ENCODE measurements at regions of chr14 and their contacts with region 1.

Region 1: GRCh38 chr14:80996049-80996901 is 40.9 kb downstream of the TSHR start:
- DNase-seq: peak; percentile 35
- ATAC-seq: peak; percentile 98
- H3K4me3 Mint-ChIP-seq: no peak overlapping the region
- H3K27ac Mint-ChIP-seq: no peak overlapping the region
- H3K4me1 Mint-ChIP-seq: peaks cover 5% of the 10 kb centered on the region
- H3K27me3 Mint-ChIP-seq: peaks cover 12% of the 10 kb centered on the region

Region 2: GRCh38 chr14:81009346-81009745 is 13.1 kb after region 1 on chr14:
- CTCF ChIA-PET with region 1: interaction called, 15 read pairs
- POLR2A ChIA-PET with region 1: no interaction called
- intact Hi-C with region 1: no loop called
- DNase-seq: no peak
- ATAC-seq: no peak
- H3K4me3 Mint-ChIP-seq: no peak overlapping the region
- H3K27ac Mint-ChIP-seq: no peak overlapping the region
- H3K4me1 Mint-ChIP-seq: no peaks in the 10 kb centered on the region
- H3K27me3 Mint-ChIP-seq: no peaks in the 10 kb centered on the region

Region 3: GRCh38 chr14:81062816-81063215 is 66.5 kb after region 1 on chr14:
- CTCF ChIA-PET with region 1: interaction called, 3 read pairs
- POLR2A ChIA-PET with region 1: no interaction called
- intact Hi-C with region 1: loop called in 1 of 2 experiments (anchors 2 kb)
- DNase-seq: peak; percentile 41
- ATAC-seq: peak; percentile 84
- H3K4me3 Mint-ChIP-seq: no peak overlapping the region
- H3K27ac Mint-ChIP-seq: no peak overlapping the region
- H3K4me1 Mint-ChIP-seq: no peaks in the 10 kb centered on the region
- H3K27me3 Mint-ChIP-seq: peaks cover 6% of the 10 kb centered on the region

Region 4: DNA sequence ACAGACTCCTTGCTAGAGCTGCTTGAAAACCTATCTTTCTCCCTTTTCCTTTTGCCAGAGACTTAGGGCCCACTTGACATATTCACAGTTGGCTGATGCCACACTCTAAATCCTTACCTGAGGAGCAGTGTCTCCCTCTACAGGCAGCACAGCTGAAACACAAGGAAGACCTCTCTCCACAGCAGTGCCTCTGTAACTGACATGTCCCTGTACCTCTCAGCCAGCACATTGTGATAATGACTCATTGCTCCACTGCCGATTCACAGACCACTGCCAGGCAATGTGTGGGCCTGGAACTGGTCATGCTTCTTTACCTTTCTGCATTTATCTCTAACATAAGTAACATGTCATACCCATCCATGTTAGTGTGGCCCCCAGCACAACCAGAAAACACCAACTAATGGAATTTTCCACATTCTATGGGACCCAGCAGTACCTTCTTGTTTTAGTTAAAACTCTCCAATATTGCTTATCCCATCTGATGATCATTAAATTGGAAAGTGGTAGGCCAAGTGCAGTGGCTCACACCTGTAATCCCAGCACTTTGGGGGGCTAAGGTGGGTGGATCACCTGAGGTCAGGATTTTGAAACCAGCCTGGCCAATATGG is 168.0 kb after region 1 on chr14:
- CTCF ChIA-PET with region 1: interaction called, 28 read pairs
- POLR2A ChIA-PET with region 1: no interaction called
- intact Hi-C with region 1: loop called (anchors 1 kb)
- DNase-seq: peak; percentile 83
- ATAC-seq: peak; percentile 100
- H3K4me3 Mint-ChIP-seq: no peak overlapping the region
- H3K27ac Mint-ChIP-seq: peak overlapping the region; percentile 38
- H3K4me1 Mint-ChIP-seq: peaks cover 20% of the 10 kb centered on the region
- H3K27me3 Mint-ChIP-seq: no peaks in the 10 kb centered on the region

Region 5: DNA sequence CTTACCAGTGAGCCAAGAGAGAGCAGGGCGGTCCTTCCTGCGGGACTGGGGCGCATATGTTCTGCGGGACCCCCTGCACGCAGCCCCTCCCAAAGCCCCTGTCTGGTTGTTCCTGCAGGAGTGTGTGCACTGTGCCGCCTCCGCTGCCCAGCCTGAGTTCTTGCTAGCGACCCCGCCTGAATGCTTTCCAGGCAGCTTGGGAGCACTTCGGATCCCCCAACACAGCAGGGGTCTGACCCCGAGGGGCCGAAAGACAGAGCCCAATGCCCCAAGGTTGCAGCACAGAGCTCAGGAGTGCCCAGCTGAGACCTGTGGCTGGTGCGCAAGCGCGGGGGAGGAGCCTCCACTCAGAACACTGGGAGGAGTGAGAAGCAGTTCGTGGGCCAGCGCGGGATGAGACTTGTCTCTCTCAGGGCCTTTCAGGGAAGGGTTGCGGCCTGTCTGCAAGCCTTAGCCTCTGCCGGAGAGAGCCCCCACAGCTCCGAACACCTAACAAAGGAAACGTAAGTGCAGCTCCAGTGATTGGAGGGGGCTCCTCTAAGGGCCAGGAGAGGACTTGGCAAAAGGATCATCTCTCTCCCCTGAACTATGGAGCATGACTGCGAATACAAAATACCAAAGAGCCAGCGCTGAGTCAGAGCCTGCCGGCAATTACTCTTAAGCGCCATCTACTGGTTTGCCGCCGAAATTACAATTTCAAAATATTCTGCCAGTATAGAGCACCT is 174.0 kb after region 1 on chr14:
- CTCF ChIA-PET with region 1: interaction called, 28 read pairs
- POLR2A ChIA-PET with region 1: no interaction called
- intact Hi-C with region 1: loop called in 1 of 2 experiments (anchors 1 kb)
- DNase-seq: peak; percentile 94
- ATAC-seq: peak; percentile 98
- H3K4me3 Mint-ChIP-seq: peak overlapping the region; percentile 83
- H3K27ac Mint-ChIP-seq: peak overlapping the region; percentile 92
- H3K4me1 Mint-ChIP-seq: peaks cover 20% of the 10 kb centered on the region
- H3K27me3 Mint-ChIP-seq: no peaks in the 10 kb centered on the region

Region 6: GRCh38 chr14:81211844-81212243 is 215.6 kb after region 1 on chr14:
- CTCF ChIA-PET with region 1: interaction called, 3 read pairs
- POLR2A ChIA-PET with region 1: no interaction called
- intact Hi-C with region 1: loop called (anchors 2 to 5 kb)
- DNase-seq: peak; percentile 45
- ATAC-seq: peak; percentile 69
- H3K4me3 Mint-ChIP-seq: no peak overlapping the region
- H3K27ac Mint-ChIP-seq: no peak overlapping the region
- H3K4me1 Mint-ChIP-seq: peaks cover 42% of the 10 kb centered on the region
- H3K27me3 Mint-ChIP-seq: no peaks in the 10 kb centered on the region

Region 7: DNA sequence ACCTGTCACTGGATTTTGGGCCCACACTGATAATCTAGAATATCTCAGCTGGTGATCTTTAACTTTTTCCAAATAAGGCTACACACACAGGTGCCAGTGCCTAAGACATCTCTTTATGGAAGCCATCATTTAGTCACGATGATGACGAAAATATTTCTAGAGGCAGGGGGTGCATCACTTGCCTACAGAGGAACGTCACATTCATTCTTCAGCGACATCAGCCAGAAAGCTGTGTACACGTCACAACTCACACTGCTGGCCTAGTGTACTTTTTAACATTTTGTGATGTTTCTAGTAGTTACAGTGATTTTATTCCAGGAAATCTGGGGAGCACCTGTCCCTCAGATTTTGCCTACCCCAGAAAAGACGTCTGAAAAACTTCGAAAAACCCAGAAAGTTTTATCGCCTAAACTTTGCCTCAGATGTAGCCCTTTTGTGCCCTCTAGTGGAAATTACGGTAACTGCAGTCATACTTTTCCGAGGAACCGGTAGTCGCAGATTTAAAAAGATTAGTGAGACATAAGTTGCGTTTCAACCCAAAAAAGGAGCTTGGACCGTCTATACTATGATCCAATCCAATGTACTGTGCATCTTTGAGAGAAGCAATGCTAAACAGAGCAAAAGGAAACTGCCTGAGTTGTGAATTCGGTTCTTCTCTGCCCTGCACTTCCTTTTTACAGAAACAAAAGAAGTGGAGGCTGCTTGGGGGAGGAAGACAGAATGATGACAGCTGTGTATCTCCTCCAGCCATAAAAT is 468.1 kb after region 1 on chr14:
- CTCF ChIA-PET with region 1: interaction called, 15 read pairs
- POLR2A ChIA-PET with region 1: no interaction called
- intact Hi-C with region 1: loop called in 1 of 2 experiments (anchors 5 kb)
- DNase-seq: peak; percentile 69
- ATAC-seq: peak; percentile 66
- H3K4me3 Mint-ChIP-seq: peak overlapping the region; percentile 70
- H3K27ac Mint-ChIP-seq: peak overlapping the region; percentile 85
- H3K4me1 Mint-ChIP-seq: peaks cover 7% of the 10 kb centered on the region
- H3K27me3 Mint-ChIP-seq: no peaks in the 10 kb centered on the region